B cell (primary cell): ENCODE measurements at regions of chr14 and their contacts with region 1.

Region 1: GRCh38 chr14:67816326-67817002 is at the start of gene ZFYVE26:
- DNase-seq: peak; percentile 97
- ATAC-seq: peak; percentile 84
- H3K4me3 ChIP-seq: peak within 1 kb of the TSS; percentile 56 to 89 (median 77)
- H3K4me3 Mint-ChIP-seq: peak within 1 kb of the TSS; percentile 95
- H3K27ac ChIP-seq: peak within 1 kb of the TSS; percentile 79 to 84
- H3K27ac Mint-ChIP-seq: peak within 1 kb of the TSS; percentile 96
- H3K4me1 ChIP-seq: peaks cover 31 to 34% of the 10 kb centered on the region in 2 donors
- H3K4me1 Mint-ChIP-seq: peaks cover 55% of the 10 kb centered on the region
- H3K27me3 ChIP-seq: no peaks in the 10 kb centered on the region
- H3K27me3 Mint-ChIP-seq: no peaks in the 10 kb centered on the region
- CTCF ChIP-seq: no peak
- total RNA-seq, gene ZFYVE26: 46.3 and 53.9 TPM in 2 replicates

Region 2: GRCh38 chr14:67359775-67360648 is 456.5 kb before region 1 on chr14 and contains the starts of genes ATP6V1D and EIF2S1:
- CTCF ChIA-PET with region 1: no interaction called
- POLR2A ChIA-PET with region 1: no interaction called
- intact Hi-C with region 1: loop called (anchors 1 kb)
- DNase-seq: peak; percentile 100
- ATAC-seq: peak; percentile 90
- H3K4me3 ChIP-seq: peak within 1 kb of the TSS; percentile 79 to 97 (median 93)
- H3K4me3 Mint-ChIP-seq: peak within 1 kb of the TSS; percentile 100
- H3K27ac ChIP-seq: peak within 1 kb of the TSS; percentile 92 to 95
- H3K27ac Mint-ChIP-seq: peak within 1 kb of the TSS; percentile 100
- H3K4me1 ChIP-seq: peaks cover 26% of the 10 kb centered on the region in 2 donors
- H3K4me1 Mint-ChIP-seq: peaks cover 50% of the 10 kb centered on the region
- H3K27me3 ChIP-seq: no peaks in the 10 kb centered on the region
- H3K27me3 Mint-ChIP-seq: no peaks in the 10 kb centered on the region
- CTCF ChIP-seq: peak; percentile 100
- total RNA-seq, gene ATP6V1D: 35.3 and 35.6 TPM in 2 replicates
- total RNA-seq, gene EIF2S1: 39.3 and 39.9 TPM in 2 replicates

Region 3: GRCh38 chr14:67619446-67620216 is 196.8 kb before region 1 on chr14 and contains the start of gene ARG2:
- CTCF ChIA-PET with region 1: no interaction called
- POLR2A ChIA-PET with region 1: no interaction called
- intact Hi-C with region 1: loop called (anchors 5 kb)
- DNase-seq: peak; percentile 98
- ATAC-seq: peak; percentile 94
- H3K4me3 ChIP-seq: peak within 1 kb of the TSS; percentile 57 to 94 (median 81)
- H3K4me3 Mint-ChIP-seq: peak within 1 kb of the TSS; percentile 92
- H3K27ac ChIP-seq: peak within 1 kb of the TSS; percentile 76 to 78
- H3K27ac Mint-ChIP-seq: peak within 1 kb of the TSS; percentile 94
- H3K4me1 ChIP-seq: peaks cover 12 to 18% of the 10 kb centered on the region in 2 donors
- H3K4me1 Mint-ChIP-seq: peaks cover 23% of the 10 kb centered on the region
- H3K27me3 ChIP-seq: peaks cover 0 to 4% (median 0%) of the 10 kb centered on the region in 4 experiments
- H3K27me3 Mint-ChIP-seq: no peaks in the 10 kb centered on the region
- CTCF ChIP-seq: no peak
- total RNA-seq, gene ARG2: 1.8 and 2.0 TPM in 2 replicates

Region 4: GRCh38 chr14:67674481-67675169 is 141.8 kb before region 1 on chr14 and contains the start of gene VTI1B:
- CTCF ChIA-PET with region 1: no interaction called
- POLR2A ChIA-PET with region 1: no interaction called
- intact Hi-C with region 1: loop called (anchors 5 kb)
- DNase-seq: peak; percentile 94
- ATAC-seq: peak; percentile 92
- H3K4me3 ChIP-seq: peak within 1 kb of the TSS; percentile 71 to 97 (median 87)
- H3K4me3 Mint-ChIP-seq: peak within 1 kb of the TSS; percentile 86
- H3K27ac ChIP-seq: peak within 1 kb of the TSS; percentile 96 to 99
- H3K27ac Mint-ChIP-seq: peak within 1 kb of the TSS; percentile 95
- H3K4me1 ChIP-seq: peaks cover 19 to 22% of the 10 kb centered on the region in 2 donors
- H3K4me1 Mint-ChIP-seq: peaks cover 30% of the 10 kb centered on the region
- H3K27me3 ChIP-seq: no peaks in the 10 kb centered on the region
- H3K27me3 Mint-ChIP-seq: no peaks in the 10 kb centered on the region
- CTCF ChIP-seq: no peak
- total RNA-seq, gene VTI1B: 58.8 and 58.9 TPM in 2 replicates

Region 5: DNA sequence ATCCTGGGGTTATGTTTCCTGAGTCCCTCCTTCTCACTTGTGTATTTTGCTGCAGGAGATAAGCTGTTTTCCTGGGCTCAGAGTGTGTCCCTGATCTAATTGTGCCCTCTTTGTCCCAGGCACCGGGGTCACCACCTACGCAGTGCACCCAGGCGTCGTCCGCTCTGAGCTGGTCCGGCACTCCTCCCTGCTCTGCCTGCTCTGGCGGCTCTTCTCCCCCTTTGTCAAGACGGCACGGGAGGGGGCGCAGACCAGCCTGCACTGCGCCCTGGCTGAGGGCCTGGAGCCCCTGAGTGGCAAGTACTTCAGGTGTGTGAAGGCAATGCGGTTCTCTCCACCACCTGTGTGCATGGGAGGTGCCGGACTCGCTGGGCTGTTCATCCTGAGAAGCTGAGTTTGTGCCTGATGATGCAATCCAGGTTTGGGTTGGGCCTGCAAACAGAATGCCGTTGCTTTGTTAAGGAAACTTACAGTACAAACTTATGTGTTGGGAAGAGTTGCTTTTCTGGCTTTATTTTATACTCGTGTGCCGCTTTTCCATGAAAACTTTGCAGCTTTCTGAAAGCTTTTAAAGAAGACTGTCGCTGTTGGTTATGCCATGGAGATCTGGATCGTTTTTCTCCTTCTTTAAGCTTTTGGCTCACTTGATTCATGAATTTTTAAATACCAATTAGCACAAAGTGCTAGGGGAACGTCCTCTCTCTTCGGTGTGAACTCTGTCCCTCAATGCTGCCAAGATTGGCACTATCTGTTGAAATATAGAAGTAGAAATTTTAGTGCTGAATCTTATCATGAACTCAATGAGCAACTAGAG is 87.2 kb before region 1 on chr14:
- CTCF ChIA-PET with region 1: no interaction called
- POLR2A ChIA-PET with region 1: no interaction called
- intact Hi-C with region 1: no loop called
- DNase-seq: no peak
- ATAC-seq: no peak
- H3K4me3 ChIP-seq: no peak overlapping the region
- H3K4me3 Mint-ChIP-seq: no peak overlapping the region
- H3K27ac ChIP-seq: no peak overlapping the region
- H3K27ac Mint-ChIP-seq: no peak overlapping the region
- H3K4me1 ChIP-seq: no peaks in the 10 kb centered on the region
- H3K4me1 Mint-ChIP-seq: no peaks in the 10 kb centered on the region
- H3K27me3 ChIP-seq: peaks cover 0 to 14% (median 0%) of the 10 kb centered on the region in 4 experiments
- H3K27me3 Mint-ChIP-seq: peaks cover 17% of the 10 kb centered on the region
- CTCF ChIP-seq: no peak

Region 6: DNA sequence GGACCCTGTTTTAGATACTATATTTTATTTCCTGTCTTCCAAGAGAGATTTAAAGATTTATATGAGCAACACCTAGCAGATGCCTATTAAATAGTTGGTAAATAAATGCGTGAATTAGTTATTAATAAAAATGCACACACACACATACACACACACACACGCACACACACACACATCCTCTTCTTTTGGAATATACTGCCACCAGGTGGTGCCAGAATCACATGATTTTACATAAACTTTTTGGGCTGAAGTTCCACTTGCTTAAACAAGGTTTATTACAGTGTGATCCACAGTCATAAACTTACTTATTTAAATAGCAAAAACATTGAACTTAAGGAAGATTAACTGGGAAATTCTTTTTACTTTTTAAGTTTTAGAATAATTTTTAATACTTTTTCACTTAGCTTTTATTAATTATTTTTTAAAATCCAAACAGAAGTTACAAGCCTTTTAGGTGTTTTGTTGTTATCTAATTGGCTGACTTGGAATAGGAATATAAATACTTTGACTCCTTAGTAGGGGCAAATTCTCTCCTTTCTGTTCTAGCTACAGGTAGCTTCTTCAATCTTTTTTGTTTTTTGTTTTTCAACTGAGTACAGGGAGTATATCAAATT is 20.7 kb after region 1 on chr14:
- CTCF ChIA-PET with region 1: interaction called, 5 read pairs
- POLR2A ChIA-PET with region 1: no interaction called
- intact Hi-C with region 1: loop called (anchors 2 kb)
- DNase-seq: peak; percentile 83
- ATAC-seq: peak; percentile 64
- H3K4me3 ChIP-seq: no peak overlapping the region
- H3K4me3 Mint-ChIP-seq: no peak overlapping the region
- H3K27ac ChIP-seq: no peak overlapping the region
- H3K27ac Mint-ChIP-seq: no peak overlapping the region
- H3K4me1 ChIP-seq: no peaks in the 10 kb centered on the region
- H3K4me1 Mint-ChIP-seq: no peaks in the 10 kb centered on the region
- H3K27me3 ChIP-seq: no peaks in the 10 kb centered on the region
- H3K27me3 Mint-ChIP-seq: no peaks in the 10 kb centered on the region
- CTCF ChIP-seq: peak; percentile 72

Region 7: DNA sequence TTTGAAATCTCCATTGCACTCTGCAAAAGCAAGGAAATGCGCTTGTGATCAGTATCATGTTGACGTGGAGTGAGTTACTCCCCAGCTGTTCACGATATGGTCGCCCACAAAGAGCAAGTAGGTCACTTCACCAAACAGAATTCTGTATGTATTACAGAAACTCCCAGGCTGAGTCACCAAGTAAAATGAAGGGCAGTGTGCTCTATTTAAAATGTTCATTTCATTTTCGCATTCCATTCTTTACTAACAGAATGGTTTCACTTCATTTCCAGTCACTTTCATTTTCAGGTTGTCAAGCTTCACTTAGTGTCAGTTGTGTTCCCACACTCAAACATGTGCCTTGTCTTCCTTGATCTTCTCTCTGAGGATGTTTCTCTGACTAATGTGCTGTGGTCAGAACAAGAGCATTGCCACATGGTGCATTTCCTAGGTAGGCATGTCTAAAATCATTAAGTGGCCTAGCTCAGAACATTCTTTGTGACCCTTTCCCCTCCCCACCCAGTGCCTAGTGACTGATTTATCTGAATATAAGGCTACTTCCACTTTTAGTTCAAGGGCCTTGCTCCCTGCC is 394.4 kb after region 1 on chr14:
- CTCF ChIA-PET with region 1: no interaction called
- POLR2A ChIA-PET with region 1: no interaction called
- intact Hi-C with region 1: loop called (anchors 2 kb)
- DNase-seq: peak; percentile 75
- ATAC-seq: peak; percentile 85
- H3K4me3 ChIP-seq: peak overlapping the region; percentile 9 to 45 (median 36)
- H3K4me3 Mint-ChIP-seq: peak overlapping the region; percentile 83
- H3K27ac ChIP-seq: peak overlapping the region; percentile 56 to 71
- H3K27ac Mint-ChIP-seq: peak overlapping the region; percentile 93
- H3K4me1 ChIP-seq: peaks cover 28 to 29% of the 10 kb centered on the region in 2 donors
- H3K4me1 Mint-ChIP-seq: peaks cover 43% of the 10 kb centered on the region
- H3K27me3 ChIP-seq: no peaks in the 10 kb centered on the region
- H3K27me3 Mint-ChIP-seq: no peaks in the 10 kb centered on the region
- CTCF ChIP-seq: no peak

Region 8: DNA sequence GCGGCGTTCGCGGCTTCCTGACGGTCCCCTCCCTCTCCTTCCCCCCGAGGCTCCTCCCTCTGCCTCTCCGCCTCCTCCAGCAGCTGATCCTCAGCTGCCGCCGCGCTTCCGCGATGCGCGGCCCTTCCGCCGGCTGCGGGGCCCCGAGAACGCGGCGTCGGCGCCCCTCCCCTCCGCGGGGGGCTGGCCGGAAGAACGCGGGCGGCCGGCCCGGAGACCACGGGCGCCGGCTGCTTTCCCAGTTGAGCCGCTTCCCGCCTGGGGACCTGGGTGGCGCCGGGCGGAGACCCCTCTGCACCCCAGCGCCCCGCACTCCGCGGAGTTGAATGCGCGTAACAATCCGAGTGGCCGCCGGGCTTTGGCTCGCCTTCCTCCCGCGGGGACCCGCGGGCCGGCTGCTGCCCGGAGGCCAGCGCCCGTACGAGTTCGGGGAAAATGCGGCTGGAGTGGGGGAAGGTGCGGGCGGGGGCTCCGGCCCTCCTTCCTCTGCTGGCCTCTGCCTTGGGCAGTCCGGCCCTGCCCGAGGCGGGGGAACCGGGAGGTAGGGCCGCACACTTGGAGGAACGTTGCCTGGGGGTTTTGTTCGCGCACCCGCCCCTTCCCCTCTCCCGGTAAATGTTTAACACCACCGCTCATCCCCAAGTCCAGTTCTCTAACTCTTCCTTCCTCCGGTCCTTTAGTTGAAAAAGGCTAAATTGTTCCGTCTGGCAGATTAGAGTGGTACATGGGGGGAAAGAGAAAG is 1336.8 kb after region 1 on chr14:
- CTCF ChIA-PET with region 1: no interaction called
- POLR2A ChIA-PET with region 1: no interaction called
- intact Hi-C with region 1: loop called (anchors 2 kb)
- DNase-seq: peak; percentile 95
- ATAC-seq: peak; percentile 92
- H3K4me3 ChIP-seq: peak overlapping the region; percentile 21 to 94 (median 92)
- H3K4me3 Mint-ChIP-seq: peak overlapping the region; percentile 89
- H3K27ac ChIP-seq: peak overlapping the region; percentile 56 to 72
- H3K27ac Mint-ChIP-seq: peak overlapping the region; percentile 95
- H3K4me1 ChIP-seq: peaks cover 9 to 21% of the 10 kb centered on the region in 2 donors
- H3K4me1 Mint-ChIP-seq: peaks cover 32% of the 10 kb centered on the region
- H3K27me3 ChIP-seq: no peaks in the 10 kb centered on the region
- H3K27me3 Mint-ChIP-seq: peaks cover 3% of the 10 kb centered on the region
- CTCF ChIP-seq: no peak